ENCODE measurements at regions of chr14 and their contacts with region 1.

Region 1: GRCh38 chr14:33792720-33793368 is 158.0 kb downstream of the EGLN3 start:
- DNase-seq: peak; percentile 74 to 77 (median 76)
- ATAC-seq: peak; percentile 92 to 98 (median 97)
- H3K4me3 ChIP-seq: no peak overlapping the region
- H3K27ac ChIP-seq: no peak overlapping the region
- H3K4me1 ChIP-seq: no peaks in the 10 kb centered on the region
- H3K27me3 ChIP-seq: no peaks in the 10 kb centered on the region
- CTCF ChIP-seq: peak; percentile 73 to 97 (median 94)
- POLR2A ChIP-seq: no peak

Region 2: GRCh38 chr14:32576088-32576795 is 1216.6 kb before region 1 on chr14:
- intact Hi-C with region 1: loop called in 1 of 2 experiments (anchors 10 kb)
- DNase-seq: peak in 1 of 3 donors; percentile 51
- ATAC-seq: peak; percentile 73 to 86 (median 76)
- H3K4me3 ChIP-seq: no peak overlapping the region
- H3K27ac ChIP-seq: no peak overlapping the region
- H3K4me1 ChIP-seq: peaks cover 0 to 34% (median 9%) of the 10 kb centered on the region in 4 donors
- H3K27me3 ChIP-seq: no peaks in the 10 kb centered on the region
- CTCF ChIP-seq: peak; percentile 89 to 99 (median 95)
- POLR2A ChIP-seq: no peak

Region 3: GRCh38 chr14:33569821-33570687 is 222.8 kb before region 1 on chr14:
- intact Hi-C with region 1: no loop called
- DNase-seq: no peak
- ATAC-seq: no peak
- H3K4me3 ChIP-seq: no peak overlapping the region
- H3K27ac ChIP-seq: no peak overlapping the region
- H3K4me1 ChIP-seq: no peaks in the 10 kb centered on the region
- H3K27me3 ChIP-seq: no peaks in the 10 kb centered on the region
- CTCF ChIP-seq: no peak
- POLR2A ChIP-seq: no peak